Activated CD4-positive, alpha-beta memory T cell treated with anti-CD3 and anti-CD28 coated beads for 36 hours (primary cell): ENCODE measurements at regions of chr13 and their contacts with region 1.

Region 1: GRCh38 chr13:97221989-97222700 is at the start of gene MBNL2:
- DNase-seq: peak; percentile 93
- H3K4me3 Mint-ChIP-seq: peak within 1 kb of the TSS; percentile 81
- H3K27ac Mint-ChIP-seq: peak within 1 kb of the TSS; percentile 91
- H3K4me1 Mint-ChIP-seq: peaks cover 31% of the 10 kb centered on the region
- H3K27me3 Mint-ChIP-seq: no peaks in the 10 kb centered on the region
- total RNA-seq, gene MBNL2: 23.4 to 24.6 TPM

Region 2: DNA sequence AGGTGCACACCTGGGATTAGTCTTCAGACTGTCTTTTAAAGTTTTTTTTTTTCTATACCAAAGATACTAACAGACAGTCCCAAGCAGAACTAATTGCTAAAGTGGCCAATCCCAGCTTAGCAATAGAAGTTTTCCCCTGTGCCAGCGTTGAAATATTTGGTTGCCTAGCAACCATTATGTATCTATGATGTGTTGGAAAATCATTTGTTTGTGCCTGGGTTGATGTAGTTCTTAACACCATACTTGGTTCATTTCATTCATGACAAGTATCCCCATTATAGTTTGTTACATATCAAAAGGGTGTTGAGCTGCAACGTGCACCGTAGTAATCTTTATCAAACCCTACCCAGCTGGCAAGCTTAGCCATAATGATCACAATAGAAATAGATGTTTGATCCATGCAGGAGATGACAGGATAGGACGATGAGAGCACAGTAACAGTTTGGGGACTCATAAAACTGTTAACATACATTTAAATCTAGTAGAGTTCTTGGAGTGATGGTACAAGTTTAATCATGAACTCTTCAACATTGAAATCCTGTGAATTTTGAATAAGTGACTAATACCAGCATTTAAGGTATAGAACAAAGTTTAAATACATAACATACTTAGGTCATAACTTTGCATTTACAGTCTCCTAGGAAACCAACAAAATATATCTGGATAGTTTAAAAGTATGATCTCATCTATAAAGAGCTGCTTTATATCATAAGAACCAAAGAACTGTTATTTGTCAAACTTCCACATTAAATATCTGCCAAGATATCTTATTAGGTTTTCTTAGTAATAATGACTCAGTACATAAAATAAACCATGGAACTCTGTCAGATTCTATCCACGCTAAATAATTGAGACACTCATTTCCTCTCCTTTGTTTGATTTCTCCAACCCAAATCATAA is 73.4 kb after region 1 on chr13:
- CTCF ChIA-PET with region 1: interaction called, 3 read pairs
- POLR2A ChIA-PET with region 1: interaction called, 4 read pairs
- intact Hi-C with region 1: loop called (anchors 1 kb)
- DNase-seq: no peak
- H3K4me3 Mint-ChIP-seq: no peak overlapping the region
- H3K27ac Mint-ChIP-seq: no peak overlapping the region
- H3K4me1 Mint-ChIP-seq: peaks cover 46% of the 10 kb centered on the region
- H3K27me3 Mint-ChIP-seq: no peaks in the 10 kb centered on the region

Region 3: GRCh38 chr13:97359181-97360057 is 137.3 kb after region 1 on chr13:
- CTCF ChIA-PET with region 1: interaction called, 16 read pairs
- POLR2A ChIA-PET with region 1: interaction called, 3 read pairs
- intact Hi-C with region 1: loop called (anchors 5 kb)
- DNase-seq: peak; percentile 52
- H3K4me3 Mint-ChIP-seq: no peak overlapping the region
- H3K27ac Mint-ChIP-seq: no peak overlapping the region
- H3K4me1 Mint-ChIP-seq: no peaks in the 10 kb centered on the region
- H3K27me3 Mint-ChIP-seq: no peaks in the 10 kb centered on the region